A673 (cell line): ENCODE measurements at regions of chr10 and their contacts with region 1.

Region 1: DNA sequence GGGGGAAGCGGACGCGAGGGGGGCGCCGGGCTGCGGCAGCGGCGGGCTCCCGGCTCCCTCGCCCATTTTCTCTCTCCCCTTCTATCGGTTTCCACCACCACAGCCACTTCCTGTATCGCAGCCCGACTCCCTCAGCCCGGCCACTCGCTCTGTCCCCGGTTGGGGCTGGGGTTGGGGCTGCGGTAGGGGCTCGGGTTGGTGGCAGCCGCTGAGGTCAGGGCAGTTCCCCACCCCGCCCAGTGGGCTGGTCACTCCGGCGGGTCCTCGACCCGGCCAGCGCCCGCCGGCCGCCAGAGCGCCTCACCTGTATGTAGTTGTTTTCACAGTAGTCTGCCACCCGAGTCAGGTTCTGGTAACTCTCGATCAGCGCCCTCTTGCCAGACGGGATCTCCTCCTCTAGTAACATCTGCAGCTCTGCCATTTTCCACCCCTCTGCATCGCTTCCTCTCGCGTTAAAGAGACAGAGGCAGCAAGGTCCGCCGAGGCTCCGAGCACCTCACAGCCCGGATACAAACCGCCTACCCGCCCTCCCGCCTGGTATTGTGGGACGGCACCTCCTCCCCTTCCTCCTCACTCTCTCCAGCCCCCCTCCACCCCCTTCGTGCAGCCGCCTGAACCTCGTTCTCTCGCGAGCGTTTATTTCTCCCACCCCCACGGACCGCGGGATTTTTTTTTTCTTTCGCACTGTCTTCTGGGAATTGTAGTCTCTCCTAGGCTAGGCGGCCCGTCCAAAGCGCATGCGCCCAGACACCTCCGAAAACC is at the start of gene ABI1:
- DNase-seq: peak; percentile 99
- H3K4me3 ChIP-seq: peak within 1 kb of the TSS; percentile 92
- H3K27ac ChIP-seq: peak within 1 kb of the TSS; percentile 94
- H3K4me1 ChIP-seq: peaks cover 14% of the 10 kb centered on the region
- H3K27me3 ChIP-seq: no peaks in the 10 kb centered on the region
- CTCF ChIP-seq: no peak
- total RNA-seq, gene ABI1: 66.2 and 70.5 TPM in 2 replicates

Region 2: DNA sequence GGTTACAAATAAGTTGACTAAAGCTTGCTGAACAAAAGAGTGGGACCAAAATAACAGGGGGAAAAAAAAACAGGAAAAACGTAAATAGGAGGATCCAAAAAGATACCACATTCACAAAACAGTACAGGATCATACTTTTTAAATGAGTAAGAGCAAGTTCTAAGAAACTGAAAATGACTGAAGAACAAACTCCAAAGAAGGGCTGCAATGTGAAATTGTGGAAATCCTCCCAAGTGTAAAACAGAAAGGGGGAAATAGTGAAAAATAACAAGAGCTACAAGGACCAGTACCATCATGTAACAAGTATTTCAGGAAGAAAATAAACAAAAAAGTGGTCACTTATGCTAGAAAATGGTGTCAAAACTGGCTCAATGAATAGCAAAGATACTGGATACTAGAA is 116.8 kb before region 1 on chr10:
- CTCF ChIA-PET with region 1: no interaction called
- POLR2A ChIA-PET with region 1: no interaction called
- intact Hi-C with region 1: no loop called
- DNase-seq: no peak
- H3K4me3 ChIP-seq: no peak overlapping the region
- H3K27ac ChIP-seq: peak overlapping the region; percentile 22
- H3K4me1 ChIP-seq: no peaks in the 10 kb centered on the region
- H3K27me3 ChIP-seq: no peaks in the 10 kb centered on the region
- CTCF ChIP-seq: no peak

Region 3: DNA sequence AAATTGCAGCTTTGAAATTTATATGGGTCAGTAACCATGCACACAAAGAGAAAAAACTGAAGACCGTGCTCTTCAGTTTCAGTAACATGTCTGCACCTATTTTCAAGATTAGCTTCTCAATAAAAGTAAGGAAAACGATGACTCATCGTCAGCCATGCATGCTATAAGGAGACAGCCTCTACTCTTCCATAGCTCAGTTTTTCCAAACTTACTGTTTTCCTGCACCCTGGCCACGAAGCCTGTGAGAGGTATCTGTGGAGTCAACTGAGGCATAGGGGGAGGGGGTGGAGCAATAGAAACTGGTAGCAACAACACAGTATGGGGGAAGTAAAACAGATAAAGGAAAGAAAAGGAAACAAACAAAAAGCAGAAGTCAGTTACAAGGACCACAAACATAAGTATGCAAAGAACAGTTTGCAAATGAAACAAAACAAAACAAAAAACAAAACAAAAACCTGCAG is 105.2 kb before region 1 on chr10:
- CTCF ChIA-PET with region 1: no interaction called
- POLR2A ChIA-PET with region 1: no interaction called
- intact Hi-C with region 1: loop called (anchors 5 kb)
- DNase-seq: peak; percentile 50
- H3K4me3 ChIP-seq: no peak overlapping the region
- H3K27ac ChIP-seq: peak overlapping the region; percentile 22
- H3K4me1 ChIP-seq: peaks cover 18% of the 10 kb centered on the region
- H3K27me3 ChIP-seq: no peaks in the 10 kb centered on the region
- CTCF ChIP-seq: no peak